AG04449 (cell line): ENCODE measurements at regions of chr6 and their contacts with region 1.

Region 1: GRCh38 chr6:57316581-57317059 is 810 bp upstream of the PRIM2 start:
- DNase-seq: peak; percentile 65
- H3K4me3 ChIP-seq: peak overlapping the region; percentile 87
- CTCF ChIP-seq: peak; percentile 66

Region 2: DNA sequence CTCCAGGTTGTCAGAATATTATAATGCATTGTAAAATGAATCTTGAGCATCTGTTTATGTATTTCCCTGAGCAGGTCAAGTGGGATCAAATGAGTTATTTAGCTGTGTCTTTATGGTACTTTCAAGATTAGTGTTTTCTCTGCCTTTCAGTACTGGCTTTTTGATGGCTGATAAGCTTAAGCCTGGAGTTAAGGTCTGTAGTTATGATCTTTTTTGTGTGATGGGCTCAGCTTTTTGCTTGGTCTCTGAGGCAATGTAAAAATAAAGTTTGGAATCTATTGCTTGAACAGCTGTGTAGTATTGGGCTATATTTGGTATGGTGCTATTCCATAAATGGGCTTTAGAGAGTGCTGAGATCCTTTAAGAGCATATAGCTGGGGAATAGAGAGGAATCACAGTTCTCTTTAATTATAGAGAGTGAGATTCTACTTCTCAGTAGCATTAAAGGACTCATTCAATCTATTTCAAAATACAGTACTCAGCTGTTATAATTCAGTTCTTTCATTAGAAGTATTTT is 185.9 kb before region 1 on chr6:
- CTCF ChIA-PET with region 1: interaction called, 25 read pairs
- POLR2A ChIA-PET with region 1: no interaction called
- DNase-seq: no peak
- H3K4me3 ChIP-seq: no peak overlapping the region
- CTCF ChIP-seq: no peak

Region 3: DNA sequence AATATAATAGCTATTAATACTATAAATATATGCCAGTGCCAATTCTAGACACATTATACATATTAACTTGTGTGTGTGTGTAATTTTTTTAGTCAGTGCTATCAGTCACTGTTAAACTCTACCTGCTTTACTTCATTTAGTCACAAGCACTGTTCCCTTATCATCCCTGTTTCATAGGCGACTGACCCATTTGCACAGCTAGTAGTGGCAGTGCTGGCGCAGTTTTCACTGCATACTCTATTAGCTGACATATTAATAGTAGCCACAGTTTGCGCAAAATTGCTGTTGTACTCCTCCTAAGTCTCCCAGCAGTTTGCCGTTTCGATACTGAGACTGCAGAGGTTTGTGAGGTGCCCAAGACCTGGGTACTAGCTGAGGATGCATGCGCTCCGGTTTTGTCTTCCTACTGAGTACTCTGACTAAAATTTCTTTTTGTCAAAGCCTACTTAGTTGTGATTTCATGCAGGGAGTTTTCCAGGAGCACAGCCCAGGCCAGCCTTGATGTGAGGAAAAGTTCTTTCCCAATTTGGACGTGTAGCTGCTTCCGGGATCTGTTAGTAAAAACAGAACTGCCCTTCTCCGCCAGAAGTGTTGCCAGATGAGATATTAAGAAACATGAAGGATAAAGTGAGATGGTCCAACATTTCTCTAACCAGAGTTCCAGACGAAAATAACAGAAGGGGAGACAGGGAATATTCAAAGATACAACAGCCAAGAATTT is 138.9 kb before region 1 on chr6:
- CTCF ChIA-PET with region 1: interaction called, 207 read pairs
- POLR2A ChIA-PET with region 1: interaction called, 6 read pairs
- DNase-seq: no peak
- H3K4me3 ChIP-seq: no peak overlapping the region
- CTCF ChIP-seq: no peak

Region 4: GRCh38 chr6:57198926-57199636 is 117.5 kb before region 1 on chr6:
- CTCF ChIA-PET with region 1: interaction called, 13 read pairs
- POLR2A ChIA-PET with region 1: interaction called, 7 read pairs
- DNase-seq: no peak
- H3K4me3 ChIP-seq: no peak overlapping the region
- CTCF ChIP-seq: no peak

Region 5: GRCh38 chr6:57267586-57268293 is 48.9 kb before region 1 on chr6:
- CTCF ChIA-PET with region 1: interaction called, 86 read pairs
- POLR2A ChIA-PET with region 1: interaction called, 18 read pairs
- DNase-seq: peak; percentile 99
- H3K4me3 ChIP-seq: no peak overlapping the region
- CTCF ChIP-seq: peak; percentile 60